Mammary epithelial cell (primary cell): ENCODE measurements at regions of chr13 and their contacts with region 1.

Region 1: DNA sequence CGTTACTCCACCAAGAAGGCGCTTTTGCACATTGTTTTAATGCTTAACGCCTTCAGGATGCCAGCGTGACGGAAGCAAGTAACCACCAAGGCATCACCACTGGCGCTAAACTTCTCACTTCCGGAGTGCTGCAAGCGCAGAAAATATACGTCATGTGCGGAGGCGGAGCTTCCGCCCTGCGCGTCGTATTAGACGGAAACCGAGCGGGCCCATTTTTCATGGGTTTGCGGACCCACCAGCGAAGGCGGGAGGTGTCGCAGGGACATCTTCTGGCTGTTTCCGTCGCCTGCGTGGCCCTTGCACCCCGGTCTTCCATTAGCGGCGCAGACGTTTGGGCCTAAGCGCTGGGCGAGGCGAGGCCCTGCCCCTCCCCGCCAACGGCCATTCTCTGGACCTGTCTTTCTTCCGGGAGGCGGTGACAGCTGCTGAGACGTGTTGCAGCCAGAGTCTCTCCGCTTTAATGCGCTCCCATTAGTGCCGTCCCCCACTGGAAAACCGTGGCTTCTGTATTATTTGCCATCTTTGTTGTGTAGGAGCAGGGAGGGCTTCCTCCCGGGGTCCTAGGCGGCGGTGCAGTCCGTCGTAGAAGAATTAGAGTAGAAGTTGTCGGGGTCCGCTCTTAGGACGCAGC is at the start of gene ERCC5:
- DNase-seq: peak; percentile 96
- H3K4me3 ChIP-seq: peak within 1 kb of the TSS; percentile 75 to 98 (median 98)
- H3K27ac ChIP-seq: peak within 1 kb of the TSS; percentile 78
- H3K4me1 ChIP-seq: peaks cover 13% of the 10 kb centered on the region
- H3K27me3 ChIP-seq: no peaks in the 10 kb centered on the region
- CTCF ChIP-seq: peak in 1 of 2 donors; percentile 12
- total RNA-seq, gene ERCC5: 56.3 to 59.1 TPM

Region 2: DNA sequence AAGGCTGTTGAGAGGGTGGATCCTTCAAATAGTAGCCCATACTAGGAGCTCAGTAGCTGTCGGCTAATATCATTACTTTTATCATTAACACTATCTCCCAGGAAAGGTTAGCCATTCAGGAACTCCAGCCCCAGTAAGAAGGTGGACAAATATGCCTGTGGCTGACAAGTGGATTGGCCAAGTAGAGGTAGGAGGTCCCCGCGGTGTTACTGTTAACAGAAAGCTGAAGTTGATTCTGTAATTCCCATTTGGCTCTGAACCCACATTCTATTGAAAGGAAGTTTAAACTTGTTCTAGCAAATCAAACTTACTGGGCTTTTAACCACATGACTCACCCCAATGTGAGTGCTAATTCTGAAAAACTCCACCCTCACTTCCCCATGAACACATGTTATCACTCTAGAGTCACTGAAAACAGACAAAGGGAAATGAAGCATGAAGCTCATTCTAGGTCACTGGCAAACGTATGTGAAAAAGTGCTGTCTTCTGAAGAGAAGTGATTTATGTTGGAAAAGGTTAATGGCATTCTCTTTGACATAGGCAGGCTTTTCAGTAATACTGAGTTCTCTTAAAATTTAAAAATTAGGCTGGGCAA is 717.4 kb before region 1 on chr13:
- CTCF ChIA-PET with region 1: no interaction called
- dilution Hi-C with region 1: no loop called
- in situ Hi-C with region 1: no loop called
- intact Hi-C with region 1: no loop called
- DNase-seq: peak; percentile 93
- H3K4me3 ChIP-seq: no peak overlapping the region
- H3K27ac ChIP-seq: peak overlapping the region; percentile 41
- H3K4me1 ChIP-seq: peaks cover 20% of the 10 kb centered on the region
- H3K27me3 ChIP-seq: no peaks in the 10 kb centered on the region
- CTCF ChIP-seq: no peak

Region 3: DNA sequence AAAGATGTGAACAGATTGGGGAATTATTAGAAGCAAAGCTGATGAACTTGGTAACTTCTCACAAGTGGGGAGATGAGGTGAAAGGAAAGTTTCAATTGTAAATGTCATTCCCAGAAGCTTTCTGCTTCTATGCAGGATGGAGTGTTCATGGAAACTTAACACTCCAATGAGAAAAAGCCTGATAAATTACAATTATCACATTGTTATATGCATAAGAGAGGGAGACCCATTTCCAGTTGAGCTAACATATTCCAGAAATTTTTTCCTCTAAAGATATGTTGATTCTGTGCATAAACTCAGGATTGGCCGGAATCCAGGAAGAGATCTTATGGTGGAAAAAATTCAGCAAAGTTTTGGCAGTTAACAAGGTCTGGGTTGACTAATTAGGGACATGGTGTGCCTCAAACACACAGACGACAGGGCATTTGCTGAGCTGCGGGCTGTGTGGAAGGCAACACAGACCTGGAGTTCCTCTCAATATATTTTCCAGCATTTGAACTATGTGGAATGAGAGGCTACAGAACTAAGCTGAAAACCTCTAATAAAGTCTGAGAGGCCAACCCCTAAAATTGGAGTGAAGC is 379.0 kb before region 1 on chr13:
- CTCF ChIA-PET with region 1: no interaction called
- dilution Hi-C with region 1: no loop called
- in situ Hi-C with region 1: no loop called
- intact Hi-C with region 1: loop called (anchors 10 kb)
- DNase-seq: no peak
- H3K4me3 ChIP-seq: no peak overlapping the region
- H3K27ac ChIP-seq: no peak overlapping the region
- H3K4me1 ChIP-seq: no peaks in the 10 kb centered on the region
- H3K27me3 ChIP-seq: peaks cover 2% of the 10 kb centered on the region
- CTCF ChIP-seq: no peak

Region 4: GRCh38 chr13:102580552-102581169 is 265.1 kb before region 1 on chr13:
- CTCF ChIA-PET with region 1: no interaction called
- dilution Hi-C with region 1: no loop called
- in situ Hi-C with region 1: loop called (anchors 10 kb)
- intact Hi-C with region 1: loop called (anchors 1 kb)
- DNase-seq: peak; percentile 51
- H3K4me3 ChIP-seq: no peak overlapping the region
- H3K27ac ChIP-seq: no peak overlapping the region
- H3K4me1 ChIP-seq: no peaks in the 10 kb centered on the region
- H3K27me3 ChIP-seq: no peaks in the 10 kb centered on the region
- CTCF ChIP-seq: peak; percentile 74 to 76

Region 5: GRCh38 chr13:102596147-102597028 is 249.4 kb before region 1 on chr13 and contains the start of gene TPP2:
- CTCF ChIA-PET with region 1: no interaction called
- dilution Hi-C with region 1: no loop called
- in situ Hi-C with region 1: no loop called
- intact Hi-C with region 1: loop called (anchors 1 kb)
- DNase-seq: peak; percentile 98
- H3K4me3 ChIP-seq: peak within 1 kb of the TSS; percentile 81 to 97 (median 91)
- H3K27ac ChIP-seq: peak within 1 kb of the TSS; percentile 94
- H3K4me1 ChIP-seq: peaks cover 24% of the 10 kb centered on the region
- H3K27me3 ChIP-seq: no peaks in the 10 kb centered on the region
- CTCF ChIP-seq: no peak
- total RNA-seq, gene TPP2: 42.8 to 46.5 TPM

Region 6: GRCh38 chr13:102773441-102774215 is 72.1 kb before region 1 on chr13 and contains the start of gene TEX30:
- CTCF ChIA-PET with region 1: no interaction called
- dilution Hi-C with region 1: no loop called
- in situ Hi-C with region 1: no loop called
- intact Hi-C with region 1: loop called (anchors 1 kb)
- DNase-seq: peak; percentile 86
- H3K4me3 ChIP-seq: peak within 1 kb of the TSS; percentile 75 to 92 (median 83)
- H3K27ac ChIP-seq: peak within 1 kb of the TSS; percentile 54
- H3K4me1 ChIP-seq: peaks cover 6% of the 10 kb centered on the region
- H3K27me3 ChIP-seq: no peaks in the 10 kb centered on the region
- CTCF ChIP-seq: no peak
- total RNA-seq, gene TEX30: 10.5 to 14.2 TPM

Region 7: GRCh38 chr13:102800145-102801041 is 45.4 kb before region 1 on chr13:
- CTCF ChIA-PET with region 1: interaction called, 4 read pairs
- dilution Hi-C with region 1: no loop called
- in situ Hi-C with region 1: no loop called
- intact Hi-C with region 1: loop called (anchors 1 kb)
- DNase-seq: peak; percentile 79
- H3K4me3 ChIP-seq: peak overlapping the region; percentile 83 to 98 (median 90)
- H3K27ac ChIP-seq: peak overlapping the region; percentile 41
- H3K4me1 ChIP-seq: peaks cover 20% of the 10 kb centered on the region
- H3K27me3 ChIP-seq: peaks cover 2% of the 10 kb centered on the region
- CTCF ChIP-seq: peak; percentile 50 to 78

Region 8: DNA sequence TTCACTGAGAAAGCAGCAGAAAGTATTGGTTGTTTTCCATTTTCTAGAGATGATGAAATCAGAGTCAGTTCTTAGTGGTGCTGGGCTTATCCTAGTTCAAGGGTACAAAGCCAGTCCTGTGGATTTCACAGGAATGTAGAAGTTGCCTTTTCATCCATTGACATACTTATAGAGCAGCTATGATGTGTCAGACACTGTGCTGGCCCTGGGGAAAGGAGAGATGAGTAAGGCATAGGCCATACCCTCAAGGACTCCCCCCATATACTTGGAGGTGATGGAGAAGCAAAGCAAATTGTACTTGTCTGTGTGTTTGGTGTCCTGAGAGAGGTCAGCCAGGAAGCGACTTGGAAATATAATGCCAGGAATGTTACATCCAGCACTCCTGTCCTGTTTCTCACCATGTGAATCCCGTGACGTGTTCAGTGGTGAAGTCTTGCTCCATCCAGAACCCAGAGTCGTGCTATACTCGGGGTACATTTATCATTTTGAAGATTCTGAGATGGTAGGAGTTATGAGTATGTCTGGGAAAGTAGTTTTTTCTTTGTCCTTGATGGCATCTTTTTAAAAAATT is 22.7 kb after region 1 on chr13:
- CTCF ChIA-PET with region 1: no interaction called
- dilution Hi-C with region 1: no loop called
- in situ Hi-C with region 1: no loop called
- intact Hi-C with region 1: no loop called
- DNase-seq: no peak
- H3K4me3 ChIP-seq: no peak overlapping the region
- H3K27ac ChIP-seq: no peak overlapping the region
- H3K4me1 ChIP-seq: peaks cover 23% of the 10 kb centered on the region
- H3K27me3 ChIP-seq: no peaks in the 10 kb centered on the region
- CTCF ChIP-seq: no peak

Region 9: GRCh38 chr13:102917019-102917418 is 71.3 kb after region 1 on chr13:
- CTCF ChIA-PET with region 1: no interaction called
- dilution Hi-C with region 1: no loop called
- in situ Hi-C with region 1: no loop called
- intact Hi-C with region 1: no loop called
- DNase-seq: no peak
- H3K4me3 ChIP-seq: no peak overlapping the region
- H3K27ac ChIP-seq: no peak overlapping the region
- H3K4me1 ChIP-seq: peaks cover 41% of the 10 kb centered on the region
- H3K27me3 ChIP-seq: no peaks in the 10 kb centered on the region
- CTCF ChIP-seq: no peak

Region 10: GRCh38 chr13:102935896-102936321 is 90.2 kb after region 1 on chr13:
- CTCF ChIA-PET with region 1: no interaction called
- dilution Hi-C with region 1: no loop called
- in situ Hi-C with region 1: no loop called
- intact Hi-C with region 1: no loop called
- DNase-seq: no peak
- H3K4me3 ChIP-seq: no peak overlapping the region
- H3K27ac ChIP-seq: no peak overlapping the region
- H3K4me1 ChIP-seq: no peaks in the 10 kb centered on the region
- H3K27me3 ChIP-seq: no peaks in the 10 kb centered on the region
- CTCF ChIP-seq: no peak